Heart right ventricle (tissue), 16 donors: ENCODE measurements at regions of chr3 and their contacts with region 1.

Region 1: GRCh38 chr3:32238453-32239306 is at the start of gene CMTM8:
- DNase-seq: peak; percentile 38 to 52
- ATAC-seq: peak; percentile 78 to 89 (median 83)
- H3K4me3 ChIP-seq: peak within 1 kb of the TSS; percentile 47 to 80 (median 68)
- H3K27ac ChIP-seq: peak within 1 kb of the TSS; percentile 77 to 96 (median 87)
- H3K4me1 ChIP-seq: peaks cover 0 to 28% (median 12%) of the 10 kb centered on the region in 9 donors
- H3K27me3 ChIP-seq: peaks cover 0 to 30% (median 0%) of the 10 kb centered on the region in 7 donors
- CTCF ChIP-seq: no peak
- total RNA-seq, gene CMTM8: 2.1 to 6.9 (median 3.4) TPM

Region 2: GRCh38 chr3:32184187-32184730 is 54.4 kb before region 1 on chr3:
- intact Hi-C with region 1: loop called in 4 of 10 experiments (anchors 5 to 10 kb)
- DNase-seq: no peak
- ATAC-seq: no peak
- H3K4me3 ChIP-seq: no peak overlapping the region
- H3K27ac ChIP-seq: no peak overlapping the region
- H3K4me1 ChIP-seq: no peaks in the 10 kb centered on the region
- H3K27me3 ChIP-seq: no peaks in the 10 kb centered on the region
- CTCF ChIP-seq: no peak

Region 3: DNA sequence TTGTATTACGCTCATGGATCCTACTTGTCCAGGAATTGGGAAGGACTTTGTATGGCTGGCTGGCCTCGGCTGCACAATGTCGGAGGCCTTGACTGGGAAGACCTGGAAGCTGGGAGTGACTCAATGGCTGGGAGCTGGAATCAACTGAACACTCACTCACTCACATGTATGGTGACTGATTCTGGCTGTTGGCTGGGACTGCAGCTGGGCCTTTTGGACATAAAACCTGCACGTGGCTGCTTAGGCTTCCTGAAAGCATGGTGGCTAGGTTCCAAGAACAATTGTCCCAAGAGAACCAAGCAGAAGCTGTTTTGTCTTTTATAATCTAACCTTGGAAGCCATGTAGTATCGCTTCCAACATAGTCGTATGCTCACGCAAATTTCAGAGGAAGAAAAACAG is 38.2 kb before region 1 on chr3:
- intact Hi-C with region 1: loop called in 4 of 10 experiments (anchors 2 to 5 kb)
- DNase-seq: peak; percentile 63 to 89
- ATAC-seq: peak; percentile 86 to 92 (median 90)
- H3K4me3 ChIP-seq: no peak overlapping the region
- H3K27ac ChIP-seq: peak overlapping the region; percentile 48 to 88 (median 80)
- H3K4me1 ChIP-seq: peaks cover 4 to 54% (median 46%) of the 10 kb centered on the region in 9 donors
- H3K27me3 ChIP-seq: no peaks in the 10 kb centered on the region
- CTCF ChIP-seq: no peak

Region 4: GRCh38 chr3:32283304-32283703 is 44.6 kb after region 1 on chr3:
- intact Hi-C with region 1: loop called in 2 of 10 experiments (anchors 5 kb)
- DNase-seq: peak; percentile 54 to 82
- ATAC-seq: peak; percentile 77 to 91 (median 83)
- H3K4me3 ChIP-seq: no peak overlapping the region
- H3K27ac ChIP-seq: peak overlapping the region in 6 of 10 donors; percentile 2 to 71 (median 56)
- H3K4me1 ChIP-seq: peaks cover 0 to 54% (median 21%) of the 10 kb centered on the region in 9 donors
- H3K27me3 ChIP-seq: no peaks in the 10 kb centered on the region
- CTCF ChIP-seq: no peak

Region 5: DNA sequence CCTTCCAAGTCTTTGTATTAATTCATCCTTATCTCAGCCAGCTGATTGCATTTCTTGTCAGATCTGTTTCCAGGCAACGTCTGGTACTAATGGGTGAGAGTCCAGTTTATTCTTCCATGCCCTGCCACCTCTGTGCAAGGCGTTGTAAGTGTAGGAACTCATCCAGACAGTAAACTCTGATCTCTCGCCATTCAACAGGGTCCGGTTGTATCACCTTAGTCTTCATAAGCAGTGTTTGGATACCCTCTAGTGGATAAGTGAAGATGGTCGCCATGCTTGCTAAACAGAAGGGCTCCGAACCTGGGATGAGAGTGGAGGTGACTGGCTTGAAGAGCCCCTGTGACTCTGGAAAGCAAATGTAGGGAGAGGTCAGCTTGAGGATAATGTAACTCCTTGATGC is 101.4 kb after region 1 on chr3:
- intact Hi-C with region 1: no loop called
- DNase-seq: peak in 1 of 2 donors; percentile 17
- ATAC-seq: peak; percentile 55 to 86 (median 81)
- H3K4me3 ChIP-seq: no peak overlapping the region
- H3K27ac ChIP-seq: no peak overlapping the region
- H3K4me1 ChIP-seq: peaks cover 0 to 24% (median 5%) of the 10 kb centered on the region in 9 donors
- H3K27me3 ChIP-seq: no peaks in the 10 kb centered on the region
- CTCF ChIP-seq: peak; percentile 14 to 69 (median 60)